ENCODE measurements at regions of chr3 and their contacts with region 1.

Region 1: DNA sequence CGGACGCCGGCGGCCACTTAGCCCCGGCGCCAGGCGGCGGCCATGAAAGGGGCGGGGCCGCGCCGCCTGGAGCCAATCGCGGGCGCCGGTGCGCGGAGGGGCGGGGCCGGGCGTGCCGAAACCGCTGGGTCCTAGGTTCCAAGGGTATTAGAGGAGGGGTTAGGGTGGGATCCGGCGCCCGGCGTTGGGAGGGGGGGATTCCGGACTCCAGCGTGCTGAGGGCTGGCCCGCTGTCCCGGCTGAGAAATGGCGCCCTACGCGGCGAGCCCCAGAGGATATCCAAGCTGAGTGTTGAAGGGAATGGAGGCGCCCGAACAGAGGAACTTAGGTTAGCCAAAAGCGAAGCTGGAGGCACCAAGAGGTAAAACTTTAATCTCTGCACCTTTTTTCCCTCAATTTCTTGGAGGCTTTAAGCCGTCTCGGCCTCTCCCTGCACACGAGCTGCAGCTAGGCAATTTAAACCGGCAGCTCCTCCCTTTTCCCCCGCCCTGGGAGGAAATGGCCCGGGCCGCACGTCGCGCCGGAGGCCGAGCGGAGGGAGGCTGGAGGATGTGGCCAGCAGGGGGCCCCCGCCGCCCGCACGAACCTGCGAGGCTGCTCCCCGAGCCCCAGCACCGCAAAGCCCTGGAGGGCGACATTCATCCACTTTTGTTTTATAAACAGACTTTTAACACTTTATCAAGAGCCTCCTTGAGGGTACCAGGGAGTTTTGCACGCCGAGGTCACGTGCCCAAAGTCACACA is at the start of gene XXYLT1:
- DNase-seq: peak; percentile 95
- H3K4me3 Mint-ChIP-seq: peak within 1 kb of the TSS; percentile 81
- H3K27ac Mint-ChIP-seq: peak within 1 kb of the TSS; percentile 75
- H3K4me1 Mint-ChIP-seq: peaks cover 21% of the 10 kb centered on the region
- H3K27me3 Mint-ChIP-seq: no peaks in the 10 kb centered on the region
- total RNA-seq, gene XXYLT1: 3.3 to 4.4 TPM

Region 2: GRCh38 chr3:194769020-194769643 is 502.2 kb before region 1 on chr3:
- CTCF ChIA-PET with region 1: no interaction called
- POLR2A ChIA-PET with region 1: no interaction called
- intact Hi-C with region 1: loop called (anchors 5 kb)
- DNase-seq: peak; percentile 96
- H3K4me3 Mint-ChIP-seq: peak overlapping the region; percentile 68
- H3K27ac Mint-ChIP-seq: peak overlapping the region; percentile 70
- H3K4me1 Mint-ChIP-seq: peaks cover 19% of the 10 kb centered on the region
- H3K27me3 Mint-ChIP-seq: peaks cover 5% of the 10 kb centered on the region

Region 3: DNA sequence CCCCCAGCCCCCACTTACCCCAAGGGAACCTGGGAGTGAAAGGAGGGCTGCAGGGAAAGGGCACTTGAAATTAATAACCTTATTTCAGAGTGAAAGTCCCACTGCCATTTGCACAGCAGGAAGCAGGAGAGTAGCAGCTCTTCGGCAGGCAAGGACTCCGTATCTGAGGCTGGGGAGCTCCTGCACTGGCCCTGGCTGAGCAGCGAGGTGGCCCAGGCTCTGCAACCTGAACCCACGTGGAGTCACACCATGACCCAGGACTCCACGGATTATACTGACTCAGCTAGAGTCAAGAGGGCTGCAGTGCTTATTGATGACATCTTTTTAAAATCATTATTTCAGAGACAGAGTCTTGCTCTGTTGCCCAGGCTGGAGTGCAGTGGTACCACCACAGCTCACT is 214.8 kb before region 1 on chr3:
- CTCF ChIA-PET with region 1: no interaction called
- POLR2A ChIA-PET with region 1: no interaction called
- intact Hi-C with region 1: no loop called
- DNase-seq: no peak
- H3K4me3 Mint-ChIP-seq: no peak overlapping the region
- H3K27ac Mint-ChIP-seq: no peak overlapping the region
- H3K4me1 Mint-ChIP-seq: no peaks in the 10 kb centered on the region
- H3K27me3 Mint-ChIP-seq: peaks cover 10% of the 10 kb centered on the region

Region 4: GRCh38 chr3:195442573-195443390 is 171.5 kb after region 1 on chr3 and contains the start of gene ACAP2:
- CTCF ChIA-PET with region 1: interaction called, 49 read pairs
- POLR2A ChIA-PET with region 1: interaction called, 8 read pairs
- intact Hi-C with region 1: loop called (anchors 1 kb)
- DNase-seq: peak; percentile 99
- H3K4me3 Mint-ChIP-seq: peak within 1 kb of the TSS; percentile 92
- H3K27ac Mint-ChIP-seq: peak within 1 kb of the TSS; percentile 91
- H3K4me1 Mint-ChIP-seq: peaks cover 39% of the 10 kb centered on the region
- H3K27me3 Mint-ChIP-seq: no peaks in the 10 kb centered on the region
- total RNA-seq, gene ACAP2: 45.0 to 47.0 TPM

Region 5: GRCh38 chr3:195517030-195517429 is 245.7 kb after region 1 on chr3:
- CTCF ChIA-PET with region 1: interaction called, 277 read pairs
- POLR2A ChIA-PET with region 1: interaction called, 7 read pairs
- intact Hi-C with region 1: loop called (anchors 2 kb)
- DNase-seq: no peak
- H3K4me3 Mint-ChIP-seq: no peak overlapping the region
- H3K27ac Mint-ChIP-seq: no peak overlapping the region
- H3K4me1 Mint-ChIP-seq: peaks cover 36% of the 10 kb centered on the region
- H3K27me3 Mint-ChIP-seq: no peaks in the 10 kb centered on the region

Region 6: DNA sequence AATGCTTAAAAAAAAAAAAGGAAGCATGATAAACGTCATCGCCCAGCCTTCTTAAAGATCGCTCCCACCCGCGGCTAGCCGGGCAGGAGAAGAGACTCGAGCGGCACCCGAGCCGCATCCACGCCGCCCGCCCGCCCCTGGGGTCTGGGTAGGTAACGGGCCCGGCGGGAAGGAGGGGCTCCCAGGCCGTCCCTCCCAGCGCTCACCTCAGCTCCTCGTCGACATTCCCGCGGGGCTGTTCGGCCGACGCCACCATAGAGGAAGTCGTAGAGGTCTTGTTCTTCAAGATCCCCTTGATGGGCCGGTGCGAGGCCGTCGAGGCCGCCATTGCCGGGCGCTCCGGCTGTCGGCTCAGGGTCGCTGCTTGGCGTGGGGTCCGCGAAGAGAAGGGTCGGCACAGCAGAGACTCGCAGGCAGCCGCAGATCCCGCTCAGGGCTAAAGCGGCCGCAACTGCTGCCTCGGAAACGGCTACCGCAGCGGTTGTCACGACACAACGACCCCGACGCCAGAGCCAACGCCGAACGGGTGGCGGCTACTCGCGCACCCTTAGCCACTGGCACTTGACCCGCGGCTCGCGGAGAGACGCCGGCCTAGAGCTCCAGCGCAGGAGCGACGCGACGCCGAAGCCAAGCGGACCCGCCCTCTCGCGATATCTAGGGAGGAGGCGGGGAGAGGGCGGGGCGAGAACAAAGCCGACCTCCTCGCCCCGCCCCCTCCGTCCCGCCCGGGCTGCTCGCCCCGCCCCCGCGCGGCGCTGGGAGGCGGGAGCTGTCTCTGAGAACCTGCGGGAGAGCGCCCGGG is 271.6 kb after region 1 on chr3 and contains the start of gene PPP1R2:
- CTCF ChIA-PET with region 1: interaction called, 38 read pairs
- POLR2A ChIA-PET with region 1: interaction called, 22 read pairs
- intact Hi-C with region 1: loop called (anchors 1 kb)
- DNase-seq: peak; percentile 93
- H3K4me3 Mint-ChIP-seq: peak within 1 kb of the TSS; percentile 90
- H3K27ac Mint-ChIP-seq: peak within 1 kb of the TSS; percentile 91
- H3K4me1 Mint-ChIP-seq: peaks cover 59% of the 10 kb centered on the region
- H3K27me3 Mint-ChIP-seq: no peaks in the 10 kb centered on the region
- total RNA-seq, gene PPP1R2: 101 to 105 TPM

Region 7: DNA sequence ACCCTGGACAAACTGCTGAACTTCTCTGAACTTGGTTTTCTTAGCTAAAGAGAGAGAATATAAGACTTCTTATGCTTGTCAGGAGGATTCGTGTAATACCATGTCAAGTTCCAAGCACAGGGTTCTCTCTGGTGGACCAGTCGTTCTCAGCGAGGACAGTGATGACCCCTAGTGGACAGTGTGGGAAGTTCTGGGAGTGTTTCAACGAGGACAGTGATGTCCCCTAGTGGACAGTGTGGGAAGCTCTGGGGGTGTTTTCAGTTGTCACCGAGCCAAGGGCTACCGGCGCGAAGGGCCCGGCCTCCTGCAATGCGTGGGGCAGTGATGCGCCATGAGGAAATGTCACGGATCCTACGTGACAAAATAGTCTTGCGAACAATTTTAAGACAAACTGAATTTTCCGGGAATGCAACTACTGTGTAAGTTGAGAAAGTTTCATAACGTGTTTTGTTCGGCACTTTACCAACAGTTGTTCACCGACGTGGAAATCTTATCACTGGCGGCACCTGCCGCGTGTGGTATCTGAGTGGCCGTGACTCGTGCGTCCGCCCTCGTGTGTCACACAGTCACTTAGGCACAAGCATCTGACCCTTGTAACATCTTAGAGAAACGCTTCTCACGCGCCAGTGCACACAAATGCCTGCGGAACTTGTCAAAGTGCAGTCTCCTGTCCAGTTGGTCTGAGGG is 579.7 kb after region 1 on chr3:
- CTCF ChIA-PET with region 1: interaction called, 15 read pairs
- POLR2A ChIA-PET with region 1: no interaction called
- intact Hi-C with region 1: loop called (anchors 1 kb)
- DNase-seq: peak; percentile 93
- H3K4me3 Mint-ChIP-seq: peak overlapping the region; percentile 16
- H3K27ac Mint-ChIP-seq: no peak overlapping the region
- H3K4me1 Mint-ChIP-seq: peaks cover 4% of the 10 kb centered on the region
- H3K27me3 Mint-ChIP-seq: peaks cover 2% of the 10 kb centered on the region

Measured in activated CD4-positive, alpha-beta memory T cell treated with anti-CD3 and anti-CD28 coated beads for 36 hours (primary cell).